ENCODE measurements at regions of chr1 and their contacts with region 1.

Region 1: DNA sequence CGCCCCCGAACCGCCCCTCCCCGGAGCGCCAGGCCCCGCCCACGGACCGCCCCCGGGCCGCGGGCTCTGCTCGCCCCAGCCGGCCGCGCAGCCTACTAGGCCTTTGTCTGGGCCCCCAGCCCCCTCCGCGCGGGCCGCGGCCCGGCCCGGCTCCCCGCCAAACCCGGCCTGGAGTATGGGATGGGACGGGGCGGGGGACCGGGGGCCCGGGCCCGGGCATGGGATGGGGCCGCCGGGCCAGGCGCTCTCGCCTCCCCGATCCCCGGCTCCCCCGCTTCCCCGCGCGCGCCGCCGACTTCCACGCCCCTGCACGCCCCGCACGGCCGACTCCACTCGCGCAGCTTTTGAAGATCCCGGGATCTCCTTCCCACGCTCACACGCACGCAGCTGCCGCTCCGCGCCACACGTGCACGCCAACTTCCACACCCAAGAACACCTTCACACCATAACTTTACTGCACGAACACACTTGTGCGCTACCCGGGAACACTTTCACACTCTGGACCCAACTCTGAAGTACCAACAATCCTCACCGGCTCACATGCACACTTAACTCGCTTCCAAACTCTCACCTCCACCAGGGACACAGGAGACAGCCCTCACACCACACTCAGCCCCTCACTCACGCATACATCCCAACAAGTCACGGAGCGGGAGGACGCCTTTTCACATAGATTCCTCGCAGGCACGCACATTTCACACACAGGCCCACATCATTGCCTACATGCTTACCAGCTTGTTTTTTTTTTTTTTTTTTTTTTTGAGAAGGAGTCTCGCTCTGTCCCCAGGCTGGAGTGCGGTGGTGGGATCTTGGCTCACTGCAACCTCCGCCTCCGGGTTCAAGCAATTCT is 487 bp upstream of the HSPG2 start:
- DNase-seq: peak; percentile 60
- ATAC-seq: peak; percentile 77
- H3K4me3 ChIP-seq: peak overlapping the region; percentile 33 to 55
- H3K27ac ChIP-seq: peak overlapping the region; percentile 33; the same call in 1 of the 2 replicates
- H3K4me1 ChIP-seq: peaks cover 36 to 88% of the 10 kb centered on the region in 2 experiments
- H3K27me3 ChIP-seq: no peaks in the 10 kb centered on the region
- CTCF ChIP-seq: no peak
- POLR2A ChIP-seq: no peak
- RAD21 ChIP-seq: no peak

Region 2: GRCh38 chr1:21782868-21783678 is 154.5 kb before region 1 on chr1 and contains the start of gene USP48:
- CTCF ChIA-PET with region 1: interaction called, 3 read pairs
- POLR2A ChIA-PET with region 1: no interaction called
- RAD21 ChIA-PET with region 1: no interaction called
- intact Hi-C with region 1: loop called (anchors 5 kb)
- DNase-seq: peak; percentile 92
- ATAC-seq: peak; percentile 87
- H3K4me3 ChIP-seq: peak within 1 kb of the TSS; percentile 67 to 78
- H3K27ac ChIP-seq: peak within 1 kb of the TSS; percentile 81
- H3K4me1 ChIP-seq: peaks cover 10 to 32% of the 10 kb centered on the region in 2 experiments; a peak in 3 of 4 replicates
- H3K27me3 ChIP-seq: no peaks in the 10 kb centered on the region
- CTCF ChIP-seq: no peak
- POLR2A ChIP-seq: peak; percentile 96
- RAD21 ChIP-seq: no peak
- total RNA-seq, gene USP48: 54.8 TPM

Measured in HCT116 (cell line).